WTC11 (cell line): ENCODE measurements at regions of chr22 and their contacts with region 1.

Region 1: GRCh38 chr22:38313384-38313955 is 3.8 kb downstream of the CSNK1E start:
- DNase-seq: no peak
- ATAC-seq: no peak
- H3K4me3 Mint-ChIP-seq: peak overlapping the region; percentile 94
- H3K27ac Mint-ChIP-seq: peak overlapping the region; percentile 93
- H3K4me1 Mint-ChIP-seq: peaks cover 77% of the 10 kb centered on the region
- H3K27me3 Mint-ChIP-seq: no peaks in the 10 kb centered on the region
- CTCF ChIP-seq: no peak

Region 2: DNA sequence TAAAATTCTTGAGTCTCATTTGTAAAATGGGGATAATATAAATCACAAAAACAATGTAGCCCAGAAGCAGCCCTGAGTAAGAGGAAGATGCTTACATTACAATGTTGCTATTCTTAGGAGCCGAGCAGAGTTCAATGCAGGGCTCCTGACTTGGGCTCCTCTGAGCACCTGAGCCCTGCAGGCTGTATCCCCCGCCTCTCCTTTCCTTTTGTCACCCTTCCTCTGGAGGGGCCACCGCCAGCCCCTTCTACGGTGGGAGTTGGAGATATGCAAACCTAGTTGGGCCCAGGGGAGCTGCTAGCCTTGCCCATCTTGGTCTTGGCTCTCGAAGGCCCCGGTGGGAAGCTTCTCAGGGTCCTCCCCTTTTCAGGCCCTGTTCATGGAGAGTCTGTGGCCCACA is 12.1 kb after region 1 on chr22:
- CTCF ChIA-PET with region 1: interaction called, 12 read pairs
- POLR2A ChIA-PET with region 1: interaction called, 6 read pairs
- DNase-seq: peak; percentile 65
- ATAC-seq: peak; percentile 92
- H3K4me3 Mint-ChIP-seq: peak overlapping the region; percentile 19
- H3K27ac Mint-ChIP-seq: peak overlapping the region; percentile 99
- H3K4me1 Mint-ChIP-seq: peaks cover 62% of the 10 kb centered on the region
- H3K27me3 Mint-ChIP-seq: no peaks in the 10 kb centered on the region
- CTCF ChIP-seq: no peak

Region 3: DNA sequence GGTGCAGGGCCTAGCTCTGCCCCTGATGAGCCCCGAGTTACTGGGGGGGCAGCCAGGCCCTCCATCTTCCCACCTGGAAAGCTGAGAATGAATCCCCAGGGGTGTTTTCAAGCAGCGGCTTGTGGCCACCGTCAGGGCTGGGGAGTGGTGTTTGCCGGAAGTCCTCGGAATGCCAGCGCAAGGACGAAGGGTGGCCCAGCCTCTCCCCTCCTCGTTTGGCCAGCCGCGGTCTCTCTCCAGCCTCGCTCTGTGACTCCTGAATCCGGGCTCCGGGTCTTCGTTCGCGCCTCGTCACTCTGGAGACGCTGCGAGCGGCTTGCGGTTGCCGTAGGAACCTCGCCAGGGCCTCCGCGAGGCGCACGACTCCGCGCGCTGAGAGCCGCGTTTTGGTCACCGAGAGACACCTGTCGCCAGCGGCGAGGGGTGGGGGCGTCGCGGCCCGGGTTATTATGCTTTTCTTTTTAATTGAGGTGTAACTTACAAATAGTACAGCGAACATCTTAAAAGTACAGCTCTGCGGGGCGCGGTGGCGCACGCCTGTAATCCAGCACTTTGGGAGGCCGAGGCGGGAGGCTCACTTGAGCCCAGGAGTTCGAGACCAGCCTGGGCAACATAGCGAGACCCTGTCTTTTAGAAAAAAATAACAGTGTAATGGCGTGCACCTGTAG is 148.1 kb after region 1 on chr22:
- CTCF ChIA-PET with region 1: no interaction called
- POLR2A ChIA-PET with region 1: no interaction called
- DNase-seq: peak; percentile 94
- ATAC-seq: peak; percentile 84
- H3K4me3 Mint-ChIP-seq: peak overlapping the region; percentile 49
- H3K27ac Mint-ChIP-seq: peak overlapping the region; percentile 27; the same call in 1 of the 2 replicates
- H3K4me1 Mint-ChIP-seq: peaks cover 28% of the 10 kb centered on the region
- H3K27me3 Mint-ChIP-seq: peaks cover 90% of the 10 kb centered on the region
- CTCF ChIP-seq: no peak